RWPE1 (cell line): ENCODE measurements at regions of chr17 and their contacts with region 1.

Region 1: GRCh38 chr17:50865984-50866774 is at the start of gene TOB1:
- DNase-seq: peak; percentile 93
- H3K27ac ChIP-seq: peak within 1 kb of the TSS; percentile 100
- CTCF ChIP-seq: no peak

Region 2: DNA sequence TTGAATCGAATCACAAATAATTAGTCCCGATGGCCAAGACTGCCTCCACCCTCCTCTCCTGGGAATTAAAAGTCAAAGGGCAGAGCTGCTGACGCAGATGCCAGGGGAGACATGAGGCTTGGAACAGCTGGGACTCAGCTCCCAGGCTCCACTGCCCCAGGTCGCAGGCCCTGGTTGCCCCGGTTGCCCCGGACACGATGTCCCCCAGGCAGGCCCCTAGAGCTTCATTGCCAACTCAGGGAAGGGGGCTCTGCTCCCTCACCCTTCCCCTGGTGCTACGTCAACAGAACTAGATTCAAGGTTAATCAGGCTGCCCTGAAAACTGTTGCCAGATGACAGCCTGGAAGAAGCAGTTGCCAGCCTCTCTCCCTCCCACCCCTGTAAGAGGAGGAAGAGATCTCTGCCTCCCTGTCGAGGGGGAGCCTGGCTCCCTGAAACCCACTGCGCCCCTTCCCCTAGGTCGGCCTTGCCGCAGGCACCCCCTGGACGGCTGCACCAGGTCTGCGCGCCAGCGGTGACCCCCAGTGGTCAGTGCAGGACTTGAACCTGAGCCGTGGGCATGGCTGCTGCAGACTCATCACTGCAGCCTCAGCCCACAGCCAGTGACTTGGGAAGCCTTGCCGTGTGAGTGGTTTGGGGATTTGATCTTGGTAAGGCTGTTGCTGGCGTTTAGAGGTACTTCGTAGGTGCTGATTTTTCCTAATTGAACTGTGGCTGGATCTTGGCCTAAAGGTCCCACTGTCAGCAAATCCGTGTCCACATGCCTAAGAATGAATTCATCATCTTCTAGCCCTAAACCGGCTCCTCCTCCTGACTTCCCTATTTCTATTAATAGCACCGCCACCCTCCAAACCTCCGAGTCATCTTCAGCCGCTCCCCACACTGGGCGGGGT is 84.1 kb after region 1 on chr17:
- CTCF ChIA-PET with region 1: interaction called, 8 read pairs
- POLR2A ChIA-PET with region 1: interaction called, 12 read pairs
- DNase-seq: peak; percentile 95
- H3K27ac ChIP-seq: peak overlapping the region; percentile 94
- CTCF ChIP-seq: peak; percentile 84

Region 3: GRCh38 chr17:51015145-51015558 is 149.0 kb after region 1 on chr17:
- CTCF ChIA-PET with region 1: no interaction called
- POLR2A ChIA-PET with region 1: no interaction called
- DNase-seq: no peak
- H3K27ac ChIP-seq: no peak overlapping the region
- CTCF ChIP-seq: no peak